Activated naive CD4-positive, alpha-beta T cell treated with anti-CD3 and anti-CD28 coated beads, Interleukin-2, amount 10 ng/mL, durations not matched to agents 7 days and 5 days (primary cell): ENCODE measurements at regions of chr20 and their contacts with region 1.

Region 1: GRCh38 chr20:38073307-38074071 is 39.9 kb downstream of the RPRD1B start:
- DNase-seq: no peak
- H3K4me3 Mint-ChIP-seq: no peak overlapping the region
- H3K27ac Mint-ChIP-seq: no peak overlapping the region
- H3K4me1 Mint-ChIP-seq: no peaks in the 10 kb centered on the region
- H3K27me3 Mint-ChIP-seq: no peaks in the 10 kb centered on the region

Region 2: GRCh38 chr20:38033310-38034107 is 40.0 kb before region 1 on chr20 and contains the starts of genes RPRD1B and TTI1:
- CTCF ChIA-PET with region 1: no interaction called
- DNase-seq: peak; percentile 92
- H3K4me3 Mint-ChIP-seq: peak within 1 kb of the TSS; percentile 91
- H3K27ac Mint-ChIP-seq: peak within 1 kb of the TSS; percentile 97
- H3K4me1 Mint-ChIP-seq: peaks cover 70% of the 10 kb centered on the region
- H3K27me3 Mint-ChIP-seq: peaks cover 5% of the 10 kb centered on the region

Region 3: GRCh38 chr20:38113401-38114325 is 40.2 kb after region 1 on chr20:
- CTCF ChIA-PET with region 1: interaction called, 10 read pairs
- DNase-seq: peak; percentile 55
- H3K4me3 Mint-ChIP-seq: no peak overlapping the region
- H3K27ac Mint-ChIP-seq: no peak overlapping the region
- H3K4me1 Mint-ChIP-seq: peaks cover 5% of the 10 kb centered on the region
- H3K27me3 Mint-ChIP-seq: peaks cover 4% of the 10 kb centered on the region